WTC11 (cell line): ENCODE measurements at regions of chr9 and their contacts with region 1.

Region 1: GRCh38 chr9:29183971-29184370 is 1610.7 kb upstream of the C9orf72 start:
- DNase-seq: no peak
- ATAC-seq: no peak
- H3K4me3 Mint-ChIP-seq: no peak overlapping the region
- H3K27ac Mint-ChIP-seq: no peak overlapping the region
- H3K4me1 Mint-ChIP-seq: peaks cover 33% of the 10 kb centered on the region
- H3K27me3 Mint-ChIP-seq: no peaks in the 10 kb centered on the region
- CTCF ChIP-seq: no peak

Region 2: DNA sequence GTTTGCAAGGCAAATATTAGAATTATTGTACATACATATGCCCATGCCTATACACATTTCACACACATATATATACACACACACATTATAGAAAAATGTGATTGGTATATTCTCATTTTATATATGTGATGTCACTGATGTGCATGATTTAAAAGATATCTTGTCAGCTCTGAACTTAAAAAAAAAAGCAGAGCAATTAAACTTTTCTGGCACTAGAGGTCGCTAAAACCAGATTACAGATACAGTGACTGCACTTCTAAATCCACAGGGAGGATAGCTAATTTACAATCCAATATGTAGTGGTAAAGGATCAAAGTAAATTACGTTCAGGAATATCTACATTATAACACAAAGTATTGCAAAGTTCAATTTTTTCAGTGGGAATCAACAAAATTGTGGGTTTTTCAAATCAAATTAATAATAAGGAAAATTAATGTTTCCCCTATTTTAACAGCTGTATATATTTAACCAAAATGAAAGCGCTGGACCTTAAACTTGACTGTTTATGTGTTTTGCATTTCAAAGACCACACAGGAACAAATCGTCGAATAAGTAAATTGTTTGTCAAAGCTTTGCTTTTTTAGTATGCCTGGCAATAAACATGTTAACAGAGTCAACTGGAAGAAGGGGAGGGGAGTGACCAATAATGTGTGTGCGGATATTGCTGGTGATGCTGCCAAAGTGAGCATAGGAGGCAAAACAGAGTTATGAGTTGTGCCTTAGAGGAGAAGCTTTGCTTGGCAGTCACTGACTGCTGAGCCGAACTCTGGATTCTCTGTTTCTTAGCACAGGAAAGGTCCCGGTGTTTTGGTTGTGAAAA is 409.3 kb before region 1 on chr9:
- CTCF ChIA-PET with region 1: interaction called, 12 read pairs
- POLR2A ChIA-PET with region 1: no interaction called
- DNase-seq: no peak
- ATAC-seq: peak; percentile 44
- H3K4me3 Mint-ChIP-seq: no peak overlapping the region
- H3K27ac Mint-ChIP-seq: no peak overlapping the region
- H3K4me1 Mint-ChIP-seq: peaks cover 23% of the 10 kb centered on the region
- H3K27me3 Mint-ChIP-seq: peaks cover 9% of the 10 kb centered on the region
- CTCF ChIP-seq: peak; percentile 27; the same call in 1 of the 2 replicates

Region 3: DNA sequence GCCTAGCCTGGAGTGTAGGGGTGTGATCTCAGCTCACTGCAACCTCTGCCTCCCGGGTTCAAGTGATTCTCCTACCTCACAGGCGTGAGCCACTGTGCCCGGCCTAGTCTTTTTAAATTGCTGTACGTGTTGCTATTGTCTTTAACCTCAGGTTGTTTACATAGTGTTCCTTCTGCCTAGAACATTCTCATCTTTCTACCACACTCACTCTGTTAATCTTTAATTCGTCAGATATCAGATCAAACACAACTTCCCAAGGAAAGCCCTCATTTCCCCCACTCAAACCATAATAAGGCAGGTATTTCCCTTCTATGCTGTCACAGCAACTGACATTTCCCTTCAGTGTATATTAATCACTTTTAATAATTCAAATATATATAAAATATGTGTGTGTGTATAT is 300.7 kb before region 1 on chr9:
- CTCF ChIA-PET with region 1: no interaction called
- POLR2A ChIA-PET with region 1: no interaction called
- DNase-seq: no peak
- ATAC-seq: no peak
- H3K4me3 Mint-ChIP-seq: no peak overlapping the region
- H3K27ac Mint-ChIP-seq: no peak overlapping the region
- H3K4me1 Mint-ChIP-seq: no peaks in the 10 kb centered on the region
- H3K27me3 Mint-ChIP-seq: no peaks in the 10 kb centered on the region
- CTCF ChIP-seq: no peak

Region 4: GRCh38 chr9:29068461-29068860 is 115.5 kb before region 1 on chr9:
- CTCF ChIA-PET with region 1: no interaction called
- POLR2A ChIA-PET with region 1: no interaction called
- DNase-seq: no peak
- ATAC-seq: no peak
- H3K4me3 Mint-ChIP-seq: no peak overlapping the region
- H3K27ac Mint-ChIP-seq: no peak overlapping the region
- H3K4me1 Mint-ChIP-seq: peaks cover 9% of the 10 kb centered on the region
- H3K27me3 Mint-ChIP-seq: no peaks in the 10 kb centered on the region
- CTCF ChIP-seq: no peak

Region 5: GRCh38 chr9:29208670-29209069 is 24.7 kb after region 1 on chr9:
- CTCF ChIA-PET with region 1: no interaction called
- POLR2A ChIA-PET with region 1: no interaction called
- DNase-seq: no peak
- ATAC-seq: no peak
- H3K4me3 Mint-ChIP-seq: no peak overlapping the region
- H3K27ac Mint-ChIP-seq: no peak overlapping the region
- H3K4me1 Mint-ChIP-seq: peaks cover 24% of the 10 kb centered on the region
- H3K27me3 Mint-ChIP-seq: peaks cover 12% of the 10 kb centered on the region
- CTCF ChIP-seq: no peak